K562 (cell line): ENCODE measurements at regions of chr12 and their contacts with region 1.

Region 1: GRCh38 chr12:53251477-53252348 is 16.4 kb upstream of the ESPL1 start:
- DNase-seq: peak; percentile 85 to 94 (median 94)
- ATAC-seq: peak; percentile 91
- H3K4me3 ChIP-seq: peak overlapping the region; percentile 96
- H3K27ac ChIP-seq: peak overlapping the region; percentile 71
- H3K4me1 ChIP-seq: peaks cover 23 to 29% of the 10 kb centered on the region in 2 experiments; a peak in 4 of 5 replicates
- H3K27me3 ChIP-seq: no peaks in the 10 kb centered on the region
- CTCF ChIP-seq: peak; percentile 66 to 73 (median 71)
- EP300 ChIP-seq: peak; percentile 2; the same call in 1 of the 2 replicates
- POLR2A ChIP-seq: peak; percentile 79
- RAD21 ChIP-seq: peak; percentile 59 to 79

Region 2: GRCh38 chr12:53213348-53213747 is 38.4 kb before region 1 on chr12:
- CTCF ChIA-PET with region 1: interaction called, 10 read pairs
- POLR2A ChIA-PET with region 1: interaction called, 3 read pairs
- in situ Hi-C with region 1: no loop called
- intact Hi-C with region 1: loop called (anchors 1 kb)
- DNase-seq: peak; percentile 79 to 87 (median 83)
- ATAC-seq: peak; percentile 94
- H3K4me3 ChIP-seq: no peak overlapping the region
- H3K27ac ChIP-seq: no peak overlapping the region
- H3K4me1 ChIP-seq: peaks cover 20 to 38% of the 10 kb centered on the region in 2 experiments
- H3K27me3 ChIP-seq: no peaks in the 10 kb centered on the region
- CTCF ChIP-seq: peak; percentile 96 to 97 (median 97)
- EP300 ChIP-seq: no peak
- POLR2A ChIP-seq: no peak
- RAD21 ChIP-seq: peak; percentile 98 to 99

Region 3: DNA sequence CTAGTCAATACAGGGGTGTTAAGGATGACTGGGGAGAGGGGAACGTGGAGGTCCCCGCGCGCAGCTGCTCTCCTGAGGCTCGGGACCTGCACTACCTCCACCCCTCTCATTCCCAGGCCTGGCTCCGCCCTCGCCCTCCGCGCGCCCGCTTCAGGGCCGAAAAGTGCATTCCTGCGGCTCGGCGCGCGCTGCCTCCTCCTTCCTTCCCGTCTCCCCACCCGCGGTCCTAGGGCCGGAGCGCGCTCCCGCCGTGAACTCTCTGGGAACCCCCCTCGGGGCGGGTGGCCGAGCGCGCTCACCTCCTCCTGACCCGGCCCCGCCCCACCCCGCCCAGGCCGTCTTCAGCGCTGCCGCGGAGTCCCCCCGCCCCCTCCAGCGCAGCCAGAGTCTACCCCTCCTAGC is 30.9 kb before region 1 on chr12:
- CTCF ChIA-PET with region 1: interaction called, 3 read pairs
- POLR2A ChIA-PET with region 1: interaction called, 3 read pairs
- in situ Hi-C with region 1: no loop called
- intact Hi-C with region 1: loop called (anchors 1 kb)
- DNase-seq: peak; percentile 95 to 96 (median 96)
- ATAC-seq: peak; percentile 86
- H3K4me3 ChIP-seq: peak overlapping the region; percentile 64
- H3K27ac ChIP-seq: peak overlapping the region; percentile 99
- H3K4me1 ChIP-seq: peaks cover 50 to 79% of the 10 kb centered on the region in 2 experiments
- H3K27me3 ChIP-seq: no peaks in the 10 kb centered on the region
- CTCF ChIP-seq: no peak
- EP300 ChIP-seq: no peak
- POLR2A ChIP-seq: no peak
- RAD21 ChIP-seq: no peak

Region 4: DNA sequence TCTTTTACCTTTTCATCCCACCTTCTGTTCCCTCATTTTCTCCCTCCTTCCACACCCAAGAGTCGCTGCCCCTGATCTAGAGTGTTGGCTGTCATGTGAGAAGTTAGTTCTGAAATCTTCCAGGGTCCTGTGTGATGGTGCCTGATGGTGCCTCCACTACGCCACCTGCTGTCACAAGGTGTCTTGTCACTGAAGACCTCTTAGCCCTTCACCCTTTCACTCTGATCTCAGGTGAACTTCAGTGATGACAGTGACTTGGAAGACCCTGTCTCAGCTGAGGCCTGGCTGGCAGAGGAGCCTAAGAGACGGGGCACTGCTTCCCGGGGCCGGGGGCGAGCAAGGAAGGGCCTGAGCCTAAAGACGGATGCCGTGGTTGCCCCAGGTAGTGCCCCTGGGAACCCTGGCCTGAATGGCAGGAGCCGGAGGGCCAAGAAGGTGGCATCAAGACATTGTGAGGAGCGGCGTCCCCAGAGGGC is 36.1 kb after region 1 on chr12:
- CTCF ChIA-PET with region 1: no interaction called
- POLR2A ChIA-PET with region 1: no interaction called
- in situ Hi-C with region 1: no loop called
- intact Hi-C with region 1: loop called (anchors 1 kb)
- DNase-seq: peak; percentile 67 to 78 (median 74)
- ATAC-seq: peak; percentile 96
- H3K4me3 ChIP-seq: no peak overlapping the region
- H3K27ac ChIP-seq: no peak overlapping the region
- H3K4me1 ChIP-seq: peaks cover 0 to 6% of the 10 kb centered on the region in 2 experiments; a peak in 1 of 5 replicates
- H3K27me3 ChIP-seq: no peaks in the 10 kb centered on the region
- CTCF ChIP-seq: peak; percentile 79 to 89 (median 83)
- EP300 ChIP-seq: no peak
- POLR2A ChIP-seq: no peak
- RAD21 ChIP-seq: peak; percentile 89 to 93